Transverse colon (tissue), 4 donors: ENCODE measurements at regions of chr1 and their contacts with region 1.

Region 1: GRCh38 chr1:71298633-71299032 is 217.8 kb upstream of the ZRANB2 start:
- DNase-seq: no peak
- H3K4me3 ChIP-seq: no peak overlapping the region
- H3K27ac ChIP-seq: no peak overlapping the region
- H3K4me1 ChIP-seq: no peaks in the 10 kb centered on the region
- H3K27me3 ChIP-seq: no peaks in the 10 kb centered on the region
- CTCF ChIP-seq: no peak
- EP300 ChIP-seq: no peak
- POLR2A ChIP-seq: no peak

Region 2: DNA sequence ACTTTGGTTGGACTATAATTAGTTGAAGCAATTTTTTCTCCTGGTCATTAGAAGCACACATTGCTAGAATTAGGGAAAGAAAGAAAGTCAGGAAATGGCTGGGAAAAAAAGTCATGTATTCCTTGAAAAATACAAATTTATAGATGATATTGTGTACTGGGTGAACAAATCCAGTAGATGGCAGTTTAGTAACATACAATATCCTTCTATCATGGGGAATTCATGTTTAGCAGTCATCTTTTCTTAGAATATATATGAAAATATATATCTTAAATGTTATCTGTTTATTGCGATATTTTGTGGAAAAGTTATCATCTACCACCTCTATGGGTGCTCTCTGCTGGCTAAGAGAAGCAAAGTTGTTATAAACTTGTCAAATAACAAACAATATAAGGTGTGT is 204.7 kb before region 1 on chr1:
- in situ Hi-C with region 1: no loop called
- intact Hi-C with region 1: no loop called
- DNase-seq: no peak
- H3K4me3 ChIP-seq: no peak overlapping the region
- H3K27ac ChIP-seq: no peak overlapping the region
- H3K4me1 ChIP-seq: peaks cover 0 to 34% (median 17%) of the 10 kb centered on the region in 4 donors
- H3K27me3 ChIP-seq: no peaks in the 10 kb centered on the region
- CTCF ChIP-seq: peak; percentile 33 to 59 (median 51)
- EP300 ChIP-seq: no peak
- POLR2A ChIP-seq: no peak

Region 3: GRCh38 chr1:71193153-71193552 is 105.5 kb before region 1 on chr1:
- in situ Hi-C with region 1: no loop called
- intact Hi-C with region 1: no loop called
- DNase-seq: no peak
- H3K4me3 ChIP-seq: no peak overlapping the region
- H3K27ac ChIP-seq: no peak overlapping the region
- H3K4me1 ChIP-seq: peaks cover 0 to 6% (median 0%) of the 10 kb centered on the region in 4 donors
- H3K27me3 ChIP-seq: no peaks in the 10 kb centered on the region
- CTCF ChIP-seq: no peak
- EP300 ChIP-seq: no peak
- POLR2A ChIP-seq: no peak

Region 4: GRCh38 chr1:71343686-71344416 is 45.2 kb after region 1 on chr1:
- in situ Hi-C with region 1: no loop called
- intact Hi-C with region 1: loop called (anchors 10 kb)
- DNase-seq: no peak
- H3K4me3 ChIP-seq: no peak overlapping the region
- H3K27ac ChIP-seq: no peak overlapping the region
- H3K4me1 ChIP-seq: no peaks in the 10 kb centered on the region
- H3K27me3 ChIP-seq: no peaks in the 10 kb centered on the region
- CTCF ChIP-seq: no peak
- EP300 ChIP-seq: no peak
- POLR2A ChIP-seq: no peak

Region 5: GRCh38 chr1:71521655-71522264 is 223.1 kb after region 1 on chr1:
- in situ Hi-C with region 1: no loop called
- intact Hi-C with region 1: no loop called
- DNase-seq: peak; percentile 58
- H3K4me3 ChIP-seq: no peak overlapping the region
- H3K27ac ChIP-seq: no peak overlapping the region
- H3K4me1 ChIP-seq: no peaks in the 10 kb centered on the region
- H3K27me3 ChIP-seq: no peaks in the 10 kb centered on the region
- CTCF ChIP-seq: peak; percentile 47 to 66 (median 63)
- EP300 ChIP-seq: no peak
- POLR2A ChIP-seq: no peak